ENCODE measurements at regions of chr17 and their contacts with region 1.

Region 1: GRCh38 chr17:75034236-75034908 is 12.4 kb downstream of the ATP5PD start:
- DNase-seq: peak; percentile 99
- ATAC-seq: peak; percentile 33
- H3K4me3 ChIP-seq: peak overlapping the region; percentile 77
- H3K27ac ChIP-seq: peak overlapping the region; percentile 87
- H3K4me1 ChIP-seq: peaks cover 36% of the 10 kb centered on the region
- H3K27me3 ChIP-seq: no peaks in the 10 kb centered on the region
- CTCF ChIP-seq: peak; percentile 3; the same call in 1 of the 2 replicates

Region 2: DNA sequence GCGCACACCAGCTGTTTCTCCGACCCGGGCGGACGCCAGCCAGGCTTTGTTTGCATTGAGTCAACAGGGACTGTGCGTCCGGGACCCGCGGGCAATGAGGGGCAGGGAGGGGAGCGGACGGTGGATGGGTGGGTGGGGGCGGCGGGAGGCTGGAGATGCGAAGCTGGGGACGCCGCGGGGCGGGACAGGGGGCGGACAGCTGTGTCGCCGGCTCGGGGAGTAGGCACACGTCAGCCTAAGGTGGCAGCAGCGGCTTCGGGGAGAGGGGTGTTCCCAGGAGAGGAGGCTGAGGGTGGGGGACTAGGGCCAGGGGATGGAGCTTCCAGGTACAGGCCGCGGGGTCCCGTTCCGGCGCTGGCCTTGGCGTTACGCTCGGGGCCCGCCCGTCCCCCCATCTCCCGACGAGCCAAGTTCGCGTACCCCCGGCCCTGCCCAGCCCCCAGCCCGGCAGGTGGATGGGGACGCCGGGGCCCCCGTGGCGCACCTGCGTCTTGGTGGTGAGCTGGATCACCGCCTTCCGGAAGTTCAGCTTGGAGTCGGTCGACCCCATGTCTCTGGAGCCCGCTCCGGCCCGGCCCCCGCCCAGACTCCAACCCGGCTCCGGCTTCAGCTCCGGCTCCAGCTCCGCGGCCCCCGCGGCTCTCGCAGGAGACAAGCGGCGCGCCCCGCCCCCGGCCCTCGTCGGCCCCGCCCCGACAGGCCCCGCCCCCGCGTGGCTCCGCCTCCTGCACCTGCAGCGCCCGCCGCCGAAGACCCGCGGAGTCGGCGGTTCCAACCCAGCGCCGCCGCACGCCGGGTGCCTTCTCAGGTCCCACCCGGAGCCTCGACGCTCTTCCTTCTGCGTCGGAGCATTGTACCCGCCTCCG is 62.0 kb before region 1 on chr17 and contains the start of gene HID1:
- CTCF ChIA-PET with region 1: no interaction called
- POLR2A ChIA-PET with region 1: no interaction called
- intact Hi-C with region 1: loop called (anchors 2 kb)
- DNase-seq: peak; percentile 88
- ATAC-seq: peak; percentile 85
- H3K4me3 ChIP-seq: peak within 1 kb of the TSS; percentile 90
- H3K27ac ChIP-seq: peak within 1 kb of the TSS; percentile 15
- H3K4me1 ChIP-seq: peaks cover 36% of the 10 kb centered on the region
- H3K27me3 ChIP-seq: no peaks in the 10 kb centered on the region
- CTCF ChIP-seq: no peak
- total RNA-seq, gene HID1: 40.6 and 51.0 TPM in 2 replicates

Region 3: DNA sequence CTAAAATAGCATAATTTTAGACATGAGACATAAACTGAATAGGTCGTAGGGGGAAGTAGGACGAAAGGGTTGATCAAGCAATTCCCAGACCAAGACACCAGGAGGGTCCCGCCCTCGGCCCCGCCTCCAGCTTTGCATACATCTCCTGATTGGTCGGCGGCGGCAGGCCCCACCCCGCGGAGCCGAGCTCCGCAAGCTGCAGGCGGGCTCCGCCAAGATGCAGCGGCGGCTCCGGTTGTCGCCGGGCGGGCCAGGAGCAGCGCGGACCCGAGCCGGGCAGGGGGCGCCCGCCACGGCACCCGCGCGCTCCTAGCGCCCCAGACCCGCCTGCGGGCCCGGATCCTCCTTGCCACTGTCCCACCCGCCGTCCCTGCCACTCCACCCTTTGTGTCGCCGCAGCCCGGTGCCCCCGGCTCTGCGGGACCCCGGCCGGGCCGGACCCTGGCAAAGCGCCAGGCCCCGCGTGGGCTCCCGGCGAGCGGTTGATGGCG is 46.9 kb before region 1 on chr17 and contains the start of gene CDR2L:
- CTCF ChIA-PET with region 1: no interaction called
- POLR2A ChIA-PET with region 1: interaction called, 4 read pairs
- intact Hi-C with region 1: loop called (anchors 2 kb)
- DNase-seq: peak; percentile 97
- ATAC-seq: peak; percentile 84
- H3K4me3 ChIP-seq: peak within 1 kb of the TSS; percentile 84
- H3K27ac ChIP-seq: peak within 1 kb of the TSS; percentile 17
- H3K4me1 ChIP-seq: peaks cover 22% of the 10 kb centered on the region
- H3K27me3 ChIP-seq: no peaks in the 10 kb centered on the region
- CTCF ChIP-seq: no peak
- total RNA-seq, gene CDR2L: 35.8 and 50.9 TPM in 2 replicates

Region 4: GRCh38 chr17:75012346-75013091 is 21.9 kb before region 1 on chr17 and contains the start of gene MRPL58:
- CTCF ChIA-PET with region 1: interaction called, 4 read pairs
- POLR2A ChIA-PET with region 1: interaction called, 3 read pairs
- intact Hi-C with region 1: loop called (anchors 1 kb)
- DNase-seq: peak; percentile 91
- ATAC-seq: peak; percentile 83
- H3K4me3 ChIP-seq: peak within 1 kb of the TSS; percentile 87
- H3K27ac ChIP-seq: peak within 1 kb of the TSS; percentile 68
- H3K4me1 ChIP-seq: peaks cover 30% of the 10 kb centered on the region
- H3K27me3 ChIP-seq: no peaks in the 10 kb centered on the region
- CTCF ChIP-seq: peak; percentile 38; the same call in 1 of the 2 replicates
- total RNA-seq, gene MRPL58: 151 and 195 TPM in 2 replicates

Region 5: DNA sequence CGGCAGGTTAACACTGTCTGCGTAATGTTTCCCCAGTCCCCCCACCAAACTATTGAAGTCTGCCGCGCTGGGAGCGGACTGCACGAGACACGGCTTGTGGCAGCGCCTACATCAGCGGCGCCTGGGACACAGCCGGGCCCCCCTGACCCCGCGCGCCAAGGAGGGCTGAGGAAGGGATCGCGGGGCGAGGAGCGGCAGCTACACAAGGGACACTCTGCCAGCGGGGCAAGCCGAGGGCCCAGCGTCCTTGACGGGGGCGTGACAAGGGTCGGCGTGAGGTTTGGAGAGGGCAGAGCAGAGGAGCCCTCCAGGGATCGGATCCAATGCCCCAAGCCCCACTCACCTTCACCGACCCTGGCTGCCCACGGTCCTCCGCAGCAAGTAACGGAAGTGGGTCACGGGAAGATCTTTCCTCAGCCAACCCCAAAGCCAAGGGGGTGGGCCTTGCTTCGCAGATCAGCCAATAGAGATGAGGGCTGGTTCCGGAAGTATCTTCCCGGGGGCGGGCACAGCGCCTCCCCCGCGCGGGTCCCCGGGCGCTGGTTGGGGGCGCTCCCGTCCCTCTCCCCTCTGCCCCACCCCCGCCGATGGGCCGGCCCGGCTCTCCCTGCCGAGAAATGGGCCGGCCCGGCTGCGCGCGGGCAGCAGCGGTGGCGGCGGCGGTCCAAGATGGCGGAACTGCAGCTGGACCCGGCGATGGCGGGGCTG is 12.4 kb after region 1 on chr17 and contains the starts of genes ATP5PD and KCTD2:
- CTCF ChIA-PET with region 1: interaction called, 6 read pairs
- POLR2A ChIA-PET with region 1: no interaction called
- intact Hi-C with region 1: loop called (anchors 1 kb)
- DNase-seq: peak; percentile 99
- ATAC-seq: peak; percentile 92
- H3K4me3 ChIP-seq: peak within 1 kb of the TSS; percentile 99
- H3K27ac ChIP-seq: peak within 1 kb of the TSS; percentile 79
- H3K4me1 ChIP-seq: peaks cover 13% of the 10 kb centered on the region
- H3K27me3 ChIP-seq: no peaks in the 10 kb centered on the region
- CTCF ChIP-seq: no peak
- total RNA-seq, gene ATP5PD: 361 and 374 TPM in 2 replicates
- total RNA-seq, gene KCTD2: 23.8 and 28.0 TPM in 2 replicates

Region 6: GRCh38 chr17:75096082-75096625 is 61.8 kb after region 1 on chr17:
- CTCF ChIA-PET with region 1: no interaction called
- POLR2A ChIA-PET with region 1: interaction called, 42 read pairs
- intact Hi-C with region 1: no loop called
- DNase-seq: peak; percentile 99
- ATAC-seq: peak; percentile 99
- H3K4me3 ChIP-seq: no peak overlapping the region
- H3K27ac ChIP-seq: peak overlapping the region; percentile 87
- H3K4me1 ChIP-seq: peaks cover 33% of the 10 kb centered on the region
- H3K27me3 ChIP-seq: no peaks in the 10 kb centered on the region
- CTCF ChIP-seq: no peak